Heart left ventricle (tissue), 16 donors: ENCODE measurements at regions of chr6 and their contacts with region 1.

Region 1: GRCh38 chr6:56499095-56499494 is 143.6 kb downstream of the DST start:
- DNase-seq: no peak
- ATAC-seq: no peak
- H3K4me3 ChIP-seq: no peak overlapping the region
- H3K27ac ChIP-seq: peak overlapping the region in 4 of 12 donors; percentile 6 to 63 (median 24)
- H3K4me1 ChIP-seq: peaks cover 0 to 16% (median 2%) of the 10 kb centered on the region in 12 donors
- H3K27me3 ChIP-seq: no peaks in the 10 kb centered on the region
- CTCF ChIP-seq: no peak
- POLR2A ChIP-seq: no peak

Region 2: GRCh38 chr6:55543633-55544309 is 955.3 kb before region 1 on chr6:
- intact Hi-C with region 1: no loop called
- DNase-seq: no peak
- ATAC-seq: no peak
- H3K4me3 ChIP-seq: no peak overlapping the region
- H3K27ac ChIP-seq: no peak overlapping the region
- H3K4me1 ChIP-seq: no peaks in the 10 kb centered on the region
- H3K27me3 ChIP-seq: no peaks in the 10 kb centered on the region
- CTCF ChIP-seq: no peak
- POLR2A ChIP-seq: no peak

Region 3: GRCh38 chr6:56459025-56459810 is 39.9 kb before region 1 on chr6:
- intact Hi-C with region 1: loop called in 1 of 10 experiments (anchors 5 kb)
- DNase-seq: no peak
- ATAC-seq: peak in 1 of 4 donors; percentile 8
- H3K4me3 ChIP-seq: no peak overlapping the region
- H3K27ac ChIP-seq: no peak overlapping the region
- H3K4me1 ChIP-seq: no peaks in the 10 kb centered on the region
- H3K27me3 ChIP-seq: no peaks in the 10 kb centered on the region
- CTCF ChIP-seq: no peak
- POLR2A ChIP-seq: no peak

Region 4: GRCh38 chr6:56532766-56533551 is 33.9 kb after region 1 on chr6:
- intact Hi-C with region 1: loop called in 1 of 10 experiments (anchors 5 kb)
- DNase-seq: no peak
- ATAC-seq: no peak
- H3K4me3 ChIP-seq: no peak overlapping the region
- H3K27ac ChIP-seq: peak overlapping the region in 1 of 12 donors; percentile 62
- H3K4me1 ChIP-seq: peaks cover 0 to 34% (median 24%) of the 10 kb centered on the region in 12 donors
- H3K27me3 ChIP-seq: no peaks in the 10 kb centered on the region
- CTCF ChIP-seq: no peak
- POLR2A ChIP-seq: no peak

Region 5: DNA sequence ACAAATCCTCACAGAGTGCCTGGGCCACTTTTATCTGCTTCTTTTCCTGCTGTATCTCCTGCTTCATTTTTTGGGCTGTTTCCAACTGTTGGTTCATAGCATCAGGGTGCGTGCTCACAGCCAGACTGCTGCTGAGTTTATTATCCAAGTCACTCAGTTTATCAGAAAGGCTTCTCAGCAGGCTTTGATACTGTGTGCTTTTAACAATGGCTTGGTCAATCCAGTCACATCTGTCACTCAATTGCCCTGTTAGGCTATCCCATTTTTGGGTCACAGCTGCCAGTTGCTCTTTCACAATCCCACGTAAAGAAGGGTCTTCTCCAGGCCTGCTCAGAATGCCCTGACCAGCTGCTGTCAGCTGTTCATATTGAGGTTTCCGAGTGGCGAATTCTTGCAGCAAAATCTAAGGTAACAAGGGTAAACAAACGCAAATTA is 56.4 kb after region 1 on chr6:
- intact Hi-C with region 1: loop called in 2 of 10 experiments (anchors 5 to 10 kb)
- DNase-seq: peak in 4 of 5 donors; percentile 28 to 51 (median 40)
- ATAC-seq: peak; percentile 88 to 98 (median 91)
- H3K4me3 ChIP-seq: no peak overlapping the region
- H3K27ac ChIP-seq: peak overlapping the region in 10 of 12 donors; percentile 16 to 74 (median 52)
- H3K4me1 ChIP-seq: peaks cover 6 to 54% (median 25%) of the 10 kb centered on the region in 12 donors
- H3K27me3 ChIP-seq: no peaks in the 10 kb centered on the region
- CTCF ChIP-seq: no peak
- POLR2A ChIP-seq: no peak